Sigmoid colon (tissue), 7 donors: ENCODE measurements at regions of chr10 and their contacts with region 1.

Region 1: GRCh38 chr10:3197348-3198003 is 24.9 kb upstream of the PITRM1 start:
- DNase-seq: peak; percentile 90
- H3K4me3 ChIP-seq: peak overlapping the region in 1 of 4 donors; percentile 15
- H3K27ac ChIP-seq: peak overlapping the region in 3 of 4 donors; percentile 19 to 70 (median 51)
- H3K4me1 ChIP-seq: peaks cover 0 to 25% (median 14%) of the 10 kb centered on the region in 4 donors
- H3K27me3 ChIP-seq: no peaks in the 10 kb centered on the region
- CTCF ChIP-seq: peak; percentile 61 to 92 (median 86)
- EP300 ChIP-seq: no peak
- POLR2A ChIP-seq: no peak

Region 2: GRCh38 chr10:3239066-3239919 is 41.8 kb after region 1 on chr10:
- intact Hi-C with region 1: loop called (anchors 5 kb)
- DNase-seq: peak; percentile 86
- H3K4me3 ChIP-seq: no peak overlapping the region
- H3K27ac ChIP-seq: peak overlapping the region in 3 of 4 donors; percentile 2 to 52 (median 38)
- H3K4me1 ChIP-seq: peaks cover 0 to 17% (median 3%) of the 10 kb centered on the region in 4 donors
- H3K27me3 ChIP-seq: no peaks in the 10 kb centered on the region
- CTCF ChIP-seq: peak; percentile 81 to 93 (median 90)
- EP300 ChIP-seq: no peak
- POLR2A ChIP-seq: no peak

Region 3: DNA sequence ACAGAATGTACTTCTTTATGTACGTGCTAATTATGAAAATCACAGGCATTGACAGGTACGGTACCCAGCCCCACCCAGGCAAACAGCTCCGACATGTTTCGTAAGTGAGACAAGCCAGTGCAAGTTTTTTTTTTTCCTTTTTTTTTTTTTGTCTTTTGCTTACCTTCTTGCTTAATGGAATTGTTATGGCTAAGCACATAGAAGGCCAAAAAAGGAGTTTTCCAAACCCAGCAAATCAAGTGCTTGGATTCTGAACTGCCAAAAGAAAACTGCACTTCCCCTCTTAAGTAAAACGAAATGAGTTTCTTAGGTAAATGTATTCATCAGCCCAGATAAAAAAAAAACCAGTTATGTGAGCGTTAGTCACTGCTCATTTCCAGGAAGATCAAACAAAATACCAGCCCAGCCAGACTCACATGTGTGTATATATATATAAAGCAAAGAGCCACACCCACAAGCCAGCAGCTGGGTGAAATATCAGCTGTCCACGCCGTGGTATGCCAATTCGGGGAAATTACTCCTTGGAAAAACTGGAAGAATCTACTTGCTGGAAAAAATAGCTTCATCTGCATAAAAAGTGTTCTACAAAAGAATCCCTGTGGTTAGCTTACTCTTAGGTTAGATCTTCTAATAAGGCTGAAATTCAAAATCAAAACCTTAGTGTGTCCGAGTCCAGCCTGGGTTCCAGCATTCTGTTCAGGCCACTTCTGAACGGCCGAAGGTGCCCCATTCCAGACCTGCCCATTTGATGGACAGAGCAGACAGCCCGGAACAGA is 579.5 kb after region 1 on chr10:
- intact Hi-C with region 1: loop called (anchors 5 kb)
- DNase-seq: peak; percentile 76
- H3K4me3 ChIP-seq: peak overlapping the region in 1 of 4 donors; percentile 7
- H3K27ac ChIP-seq: peak overlapping the region; percentile 98 to 100 (median 100)
- H3K4me1 ChIP-seq: peaks cover 0 to 74% (median 73%) of the 10 kb centered on the region in 4 donors
- H3K27me3 ChIP-seq: no peaks in the 10 kb centered on the region
- CTCF ChIP-seq: no peak
- EP300 ChIP-seq: peak in 3 of 4 donors; percentile 32 to 93 (median 75)
- POLR2A ChIP-seq: no peak

Region 4: GRCh38 chr10:4767033-4767814 is 1569.7 kb after region 1 on chr10:
- intact Hi-C with region 1: loop called (anchors 2 kb)
- DNase-seq: no peak
- H3K4me3 ChIP-seq: no peak overlapping the region
- H3K27ac ChIP-seq: peak overlapping the region in 2 of 4 donors; percentile 1 to 58
- H3K4me1 ChIP-seq: peaks cover 0 to 40% (median 28%) of the 10 kb centered on the region in 4 donors
- H3K27me3 ChIP-seq: no peaks in the 10 kb centered on the region
- CTCF ChIP-seq: peak; percentile 47 to 79 (median 64)
- EP300 ChIP-seq: no peak
- POLR2A ChIP-seq: no peak